ENCODE measurements at regions of chr1 and their contacts with region 1.

Region 1: DNA sequence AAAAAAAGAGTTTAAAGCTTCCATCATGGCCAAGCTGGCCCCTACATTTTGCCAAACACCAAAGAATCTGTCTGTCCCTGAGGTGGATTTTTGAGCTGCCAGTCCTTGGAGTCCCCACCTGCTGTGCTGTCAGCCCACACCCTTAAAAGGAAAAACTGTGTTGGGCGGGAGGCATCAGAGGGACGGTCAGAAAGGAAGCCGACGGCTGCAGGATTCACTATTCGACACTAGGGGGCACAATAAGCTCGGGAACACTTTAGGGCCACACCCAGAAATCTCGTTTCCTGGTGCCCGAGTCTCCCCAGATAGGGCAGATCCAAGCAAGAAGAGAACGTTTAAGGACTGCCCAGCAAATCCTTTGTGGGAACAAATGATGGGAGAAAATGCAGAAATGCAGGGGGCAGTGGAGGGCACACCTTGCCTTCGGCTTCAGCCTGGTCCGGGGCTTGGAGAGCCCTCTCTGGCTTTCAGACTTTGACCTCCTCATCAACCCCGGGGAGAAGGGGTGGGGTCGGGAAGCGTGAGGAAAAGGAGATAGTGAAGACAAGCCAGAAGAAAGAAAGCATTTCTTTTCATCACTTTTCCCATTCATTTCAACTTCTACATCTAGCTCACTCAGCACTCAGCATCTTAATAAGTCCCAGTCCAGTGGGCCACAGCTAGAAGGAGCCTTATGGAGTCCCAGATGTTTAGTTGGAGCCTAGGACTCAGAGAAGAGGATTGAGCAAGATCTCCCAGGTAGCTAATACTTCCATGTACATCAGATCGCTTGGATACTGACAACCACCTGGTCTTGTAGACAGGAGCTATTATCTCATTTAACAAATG is 5.0 kb upstream of the CTTNBP2NL start:
- DNase-seq: peak; percentile 92 to 94 (median 93)
- ATAC-seq: peak; percentile 93
- H3K4me3 ChIP-seq: peak overlapping the region in 1 of 2 donors; percentile 8
- H3K27ac ChIP-seq: peak overlapping the region; percentile 35 to 60 (median 53)
- H3K4me1 ChIP-seq: peaks cover 28% of the 10 kb centered on the region
- H3K27me3 ChIP-seq: no peaks in the 10 kb centered on the region
- CTCF ChIP-seq: peak; percentile 86 to 98 (median 97)
- POLR2A ChIP-seq: peak in 2 of 3 donors; percentile 29 to 55

Region 2: GRCh38 chr1:112444269-112444668 is 53.3 kb after region 1 on chr1:
- intact Hi-C with region 1: no loop called
- DNase-seq: no peak
- ATAC-seq: no peak
- H3K4me3 ChIP-seq: no peak overlapping the region
- H3K27ac ChIP-seq: no peak overlapping the region
- H3K4me1 ChIP-seq: peaks cover 7% of the 10 kb centered on the region
- H3K27me3 ChIP-seq: no peaks in the 10 kb centered on the region
- CTCF ChIP-seq: no peak
- POLR2A ChIP-seq: no peak

Region 3: DNA sequence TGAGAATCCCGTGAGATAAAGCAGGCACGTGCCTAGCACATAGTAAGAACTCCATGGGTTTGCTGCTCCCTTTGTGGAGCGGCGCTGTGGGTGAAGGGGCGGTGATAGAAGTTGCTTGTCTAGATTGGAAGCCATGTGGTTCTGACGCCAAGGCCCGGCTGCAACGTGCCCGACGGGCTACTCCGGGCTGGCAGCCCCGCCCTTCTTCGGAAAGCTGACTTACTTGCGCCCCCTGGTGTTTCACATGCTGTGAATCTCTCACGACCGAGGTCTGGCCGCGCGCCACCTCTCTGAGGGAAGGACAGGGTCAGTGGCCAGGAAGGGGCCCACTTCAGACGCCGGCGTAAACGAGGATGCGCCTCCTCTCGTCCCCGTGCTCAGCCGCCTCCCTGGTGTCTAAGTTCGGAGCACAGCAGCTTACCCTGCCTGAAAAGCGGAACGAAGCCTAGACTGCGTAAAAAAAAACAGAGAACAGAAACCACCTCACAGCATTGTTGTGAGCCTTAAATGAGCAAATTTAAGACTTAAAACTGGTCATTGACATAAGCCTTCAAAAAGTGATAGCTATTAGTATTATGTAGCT is 75.2 kb after region 1 on chr1:
- intact Hi-C with region 1: loop called (anchors 5 kb)
- DNase-seq: peak; percentile 95 to 97 (median 96)
- ATAC-seq: peak; percentile 97
- H3K4me3 ChIP-seq: no peak overlapping the region
- H3K27ac ChIP-seq: peak overlapping the region in 2 of 4 donors; percentile 21 to 56
- H3K4me1 ChIP-seq: peaks cover 13% of the 10 kb centered on the region
- H3K27me3 ChIP-seq: no peaks in the 10 kb centered on the region
- CTCF ChIP-seq: peak; percentile 60 to 97 (median 95)
- POLR2A ChIP-seq: peak in 2 of 3 donors; percentile 20 to 28

Region 4: GRCh38 chr1:112557385-112557784 is 166.4 kb after region 1 on chr1:
- intact Hi-C with region 1: no loop called
- DNase-seq: no peak
- ATAC-seq: no peak
- H3K4me3 ChIP-seq: no peak overlapping the region
- H3K27ac ChIP-seq: no peak overlapping the region
- H3K4me1 ChIP-seq: no peaks in the 10 kb centered on the region
- H3K27me3 ChIP-seq: no peaks in the 10 kb centered on the region
- CTCF ChIP-seq: no peak
- POLR2A ChIP-seq: no peak

Region 5: DNA sequence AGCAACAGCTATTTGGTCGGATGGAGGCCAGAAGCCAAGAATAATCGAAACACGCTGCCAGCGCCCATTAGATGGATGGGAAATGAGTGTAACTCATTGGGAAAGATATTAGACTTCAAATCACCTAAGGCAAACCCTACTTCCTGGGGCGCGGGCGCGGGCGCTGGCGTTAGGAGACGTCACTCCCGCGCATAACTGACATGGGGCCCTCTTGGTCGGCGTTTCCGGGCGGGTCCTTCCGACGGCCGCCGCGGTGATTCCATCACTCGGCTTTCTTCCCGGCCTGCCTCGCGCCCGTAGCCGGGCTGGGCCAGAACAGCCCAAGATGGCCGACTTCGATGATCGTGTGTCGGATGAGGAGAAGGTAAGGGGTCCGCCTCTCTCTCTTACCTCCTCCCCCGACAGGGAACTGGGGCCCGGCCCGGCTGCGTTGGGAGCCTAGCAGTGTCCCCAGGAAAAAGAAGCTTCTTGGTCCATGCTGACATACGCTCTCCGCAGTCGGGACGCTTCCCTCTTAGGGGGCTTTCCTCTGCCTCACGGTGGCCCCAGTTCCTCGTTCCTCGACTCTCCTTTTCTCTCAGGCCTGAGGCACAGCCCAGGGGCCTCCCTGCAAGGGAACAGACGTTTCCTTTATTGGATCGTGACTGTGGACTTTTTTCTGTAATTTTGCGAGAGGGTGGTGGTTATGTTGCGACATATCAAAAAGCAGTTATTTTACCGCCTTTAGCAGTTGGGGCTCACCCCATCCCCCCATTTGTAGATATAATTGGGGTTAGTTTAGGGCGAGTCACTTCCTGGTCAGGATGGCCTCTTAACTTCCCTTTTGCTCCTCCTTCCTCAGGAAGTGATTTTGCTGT is 228.8 kb after region 1 on chr1 and contains the start of gene CAPZA1:
- intact Hi-C with region 1: no loop called
- DNase-seq: peak; percentile 89 to 93 (median 91)
- ATAC-seq: peak; percentile 98
- H3K4me3 ChIP-seq: peak within 1 kb of the TSS; percentile 59 to 82
- H3K27ac ChIP-seq: peak within 1 kb of the TSS; percentile 90 to 98 (median 96)
- H3K4me1 ChIP-seq: peaks cover 33% of the 10 kb centered on the region
- H3K27me3 ChIP-seq: no peaks in the 10 kb centered on the region
- CTCF ChIP-seq: no peak
- POLR2A ChIP-seq: peak; percentile 77 to 90 (median 88)
- total RNA-seq, gene CAPZA1: 56.0 to 66.9 TPM